ENCODE measurements at regions of chr13 and their contacts with region 1.

Region 1: GRCh38 chr13:84917252-84917878 is 881.9 kb downstream of the SLITRK6 start:
- DNase-seq: no peak
- H3K4me3 ChIP-seq: no peak overlapping the region
- H3K4me3 Mint-ChIP-seq: no peak overlapping the region
- H3K27ac Mint-ChIP-seq: no peak overlapping the region
- H3K4me1 ChIP-seq: no peaks in the 10 kb centered on the region
- H3K4me1 Mint-ChIP-seq: no peaks in the 10 kb centered on the region
- H3K27me3 ChIP-seq: no peaks in the 10 kb centered on the region
- H3K27me3 Mint-ChIP-seq: no peaks in the 10 kb centered on the region
- CTCF ChIP-seq: peak; percentile 20 to 42

Region 2: GRCh38 chr13:84985860-84986259 is 68.5 kb after region 1 on chr13:
- CTCF ChIA-PET with region 1: no interaction called
- POLR2A ChIA-PET with region 1: no interaction called
- intact Hi-C with region 1: loop called (anchors 5 kb)
- DNase-seq: peak in 1 of 2 experiments; percentile 9
- H3K4me3 ChIP-seq: no peak overlapping the region
- H3K4me3 Mint-ChIP-seq: no peak overlapping the region
- H3K27ac Mint-ChIP-seq: no peak overlapping the region
- H3K4me1 ChIP-seq: no peaks in the 10 kb centered on the region
- H3K4me1 Mint-ChIP-seq: no peaks in the 10 kb centered on the region
- H3K27me3 ChIP-seq: no peaks in the 10 kb centered on the region
- H3K27me3 Mint-ChIP-seq: no peaks in the 10 kb centered on the region
- CTCF ChIP-seq: peak in 1 of 2 experiments; percentile 33

Region 3: GRCh38 chr13:85261757-85262346 is 344.5 kb after region 1 on chr13:
- CTCF ChIA-PET with region 1: no interaction called
- POLR2A ChIA-PET with region 1: no interaction called
- intact Hi-C with region 1: loop called (anchors 1 kb)
- DNase-seq: no peak
- H3K4me3 ChIP-seq: no peak overlapping the region
- H3K4me3 Mint-ChIP-seq: no peak overlapping the region
- H3K27ac Mint-ChIP-seq: no peak overlapping the region
- H3K4me1 ChIP-seq: no peaks in the 10 kb centered on the region
- H3K4me1 Mint-ChIP-seq: peaks cover 22% of the 10 kb centered on the region
- H3K27me3 ChIP-seq: no peaks in the 10 kb centered on the region
- H3K27me3 Mint-ChIP-seq: no peaks in the 10 kb centered on the region
- CTCF ChIP-seq: peak; percentile 58 to 61

Region 4: GRCh38 chr13:85806553-85807175 is 889.3 kb after region 1 on chr13:
- CTCF ChIA-PET with region 1: no interaction called
- POLR2A ChIA-PET with region 1: no interaction called
- intact Hi-C with region 1: loop called (anchors 1 kb)
- DNase-seq: peak in 1 of 2 experiments; percentile 59
- H3K4me3 ChIP-seq: no peak overlapping the region
- H3K4me3 Mint-ChIP-seq: no peak overlapping the region
- H3K27ac Mint-ChIP-seq: no peak overlapping the region
- H3K4me1 ChIP-seq: no peaks in the 10 kb centered on the region
- H3K4me1 Mint-ChIP-seq: no peaks in the 10 kb centered on the region
- H3K27me3 ChIP-seq: no peaks in the 10 kb centered on the region
- H3K27me3 Mint-ChIP-seq: no peaks in the 10 kb centered on the region
- CTCF ChIP-seq: peak; percentile 56 to 81

Region 5: GRCh38 chr13:85828149-85828548 is 910.8 kb after region 1 on chr13:
- CTCF ChIA-PET with region 1: interaction called, 3 read pairs
- POLR2A ChIA-PET with region 1: no interaction called
- intact Hi-C with region 1: loop called (anchors 5 kb)
- DNase-seq: no peak
- H3K4me3 ChIP-seq: no peak overlapping the region
- H3K4me3 Mint-ChIP-seq: no peak overlapping the region
- H3K27ac Mint-ChIP-seq: no peak overlapping the region
- H3K4me1 ChIP-seq: no peaks in the 10 kb centered on the region
- H3K4me1 Mint-ChIP-seq: no peaks in the 10 kb centered on the region
- H3K27me3 ChIP-seq: no peaks in the 10 kb centered on the region
- H3K27me3 Mint-ChIP-seq: no peaks in the 10 kb centered on the region
- CTCF ChIP-seq: peak; percentile 65 to 79

Measured in Caco-2 (cell line).